K562 (cell line): ENCODE measurements at regions of chr1 and their contacts with region 1.

Region 1: GRCh38 chr1:50332941-50333594 is 90.2 kb downstream of the DMRTA2 start:
- DNase-seq: peak; percentile 88 to 89 (median 88)
- ATAC-seq: peak; percentile 98
- H3K4me3 ChIP-seq: peak overlapping the region; percentile 46
- H3K27ac ChIP-seq: peak overlapping the region; percentile 78
- H3K4me1 ChIP-seq: peaks cover 0 to 12% of the 10 kb centered on the region in 2 experiments; a peak in 3 of 5 replicates
- H3K27me3 ChIP-seq: peaks cover 4 to 16% of the 10 kb centered on the region in 2 experiments; a peak in 2 of 5 replicates
- CTCF ChIP-seq: peak; percentile 86 to 96 (median 92)
- EP300 ChIP-seq: no peak
- POLR2A ChIP-seq: peak; percentile 38; the same call in 1 of the 2 replicates
- RAD21 ChIP-seq: peak; percentile 74 to 91

Region 2: DNA sequence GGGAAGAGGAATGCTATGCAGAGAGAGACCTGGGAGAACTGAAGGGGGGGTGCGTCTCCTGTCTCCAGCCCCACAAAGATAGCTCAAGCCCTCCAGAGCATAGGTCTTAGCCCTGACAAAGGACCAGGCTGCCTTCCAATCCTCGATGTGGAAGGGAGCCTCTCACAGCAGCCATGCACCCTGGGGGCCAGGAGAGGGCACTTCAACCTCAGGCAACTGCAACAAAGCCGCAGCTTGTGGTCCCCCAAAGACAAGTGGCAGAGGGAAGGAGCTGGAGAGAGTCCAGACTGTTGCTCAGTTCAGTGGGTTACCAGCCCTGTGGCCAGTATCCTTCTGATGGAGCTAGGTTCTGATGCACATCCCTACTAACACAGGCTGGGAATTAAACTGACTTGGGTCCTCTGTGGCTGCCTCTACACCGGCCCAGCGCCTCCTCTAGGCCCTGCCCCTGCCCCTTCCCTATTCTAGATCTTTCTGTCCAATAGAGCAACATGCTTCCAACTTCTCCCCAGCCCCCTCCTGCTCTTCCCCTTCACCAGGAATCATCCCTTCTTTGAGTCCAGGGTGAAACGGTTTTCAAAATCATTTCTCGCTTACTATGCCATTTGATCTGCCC is 1760.3 kb before region 1 on chr1:
- CTCF ChIA-PET with region 1: interaction called, 5 read pairs
- POLR2A ChIA-PET with region 1: no interaction called
- in situ Hi-C with region 1: no loop called
- intact Hi-C with region 1: loop called (anchors 5 kb)
- DNase-seq: peak; percentile 37 to 49 (median 45)
- ATAC-seq: peak; percentile 91
- H3K4me3 ChIP-seq: no peak overlapping the region
- H3K27ac ChIP-seq: no peak overlapping the region
- H3K4me1 ChIP-seq: no peaks in the 10 kb centered on the region
- H3K27me3 ChIP-seq: no peaks in the 10 kb centered on the region
- CTCF ChIP-seq: peak; percentile 60 to 70 (median 65)
- EP300 ChIP-seq: no peak
- POLR2A ChIP-seq: no peak
- RAD21 ChIP-seq: peak; percentile 54 to 71

Region 3: GRCh38 chr1:50098591-50099021 is 234.5 kb before region 1 on chr1:
- CTCF ChIA-PET with region 1: no interaction called
- POLR2A ChIA-PET with region 1: no interaction called
- in situ Hi-C with region 1: no loop called
- intact Hi-C with region 1: loop called (anchors 10 kb)
- DNase-seq: no peak
- ATAC-seq: no peak
- H3K4me3 ChIP-seq: no peak overlapping the region
- H3K27ac ChIP-seq: no peak overlapping the region
- H3K4me1 ChIP-seq: no peaks in the 10 kb centered on the region
- H3K27me3 ChIP-seq: no peaks in the 10 kb centered on the region
- CTCF ChIP-seq: no peak
- EP300 ChIP-seq: no peak
- POLR2A ChIP-seq: no peak
- RAD21 ChIP-seq: no peak